ENCODE measurements at regions of chrX and their contacts with region 1.

Region 1: GRCh38 chrX:50905334-50905733 is 5.2 kb upstream of the BMP15 start:
- DNase-seq: peak; percentile 29
- ATAC-seq: no peak
- H3K4me3 Mint-ChIP-seq: no peak overlapping the region
- H3K27ac Mint-ChIP-seq: no peak overlapping the region
- H3K4me1 Mint-ChIP-seq: no peaks in the 10 kb centered on the region
- H3K27me3 Mint-ChIP-seq: no peaks in the 10 kb centered on the region
- CTCF ChIP-seq: peak; percentile 61

Region 2: DNA sequence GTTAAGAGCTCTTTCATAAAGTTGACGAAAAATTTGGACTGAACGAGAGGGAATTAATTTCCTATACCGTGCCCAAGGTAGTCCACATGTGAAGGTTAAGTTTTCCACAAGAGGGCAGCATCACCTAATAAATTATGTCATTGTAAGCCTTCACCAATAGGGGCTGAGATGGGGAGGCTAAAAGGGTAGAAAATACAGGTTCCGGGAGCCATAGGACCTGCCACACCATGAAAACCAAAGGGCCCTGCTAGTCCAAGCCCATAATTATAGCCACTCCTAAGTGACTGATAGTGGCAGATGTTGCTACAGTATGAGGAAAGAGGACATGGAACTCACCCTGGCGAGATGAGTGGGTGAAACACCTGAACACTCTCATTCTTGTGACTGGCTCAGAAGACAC is 213.5 kb before region 1 on chrX:
- CTCF ChIA-PET with region 1: interaction called, 12 read pairs
- POLR2A ChIA-PET with region 1: no interaction called
- DNase-seq: no peak
- ATAC-seq: peak; percentile 76
- H3K4me3 Mint-ChIP-seq: no peak overlapping the region
- H3K27ac Mint-ChIP-seq: no peak overlapping the region
- H3K4me1 Mint-ChIP-seq: peaks cover 11% of the 10 kb centered on the region
- H3K27me3 Mint-ChIP-seq: no peaks in the 10 kb centered on the region
- CTCF ChIP-seq: peak; percentile 52

Region 3: GRCh38 chrX:50747471-50747900 is 157.8 kb before region 1 on chrX:
- CTCF ChIA-PET with region 1: interaction called, 15 read pairs
- POLR2A ChIA-PET with region 1: no interaction called
- DNase-seq: peak; percentile 17
- ATAC-seq: peak; percentile 51; the same call in 1 of the 2 replicates
- H3K4me3 Mint-ChIP-seq: no peak overlapping the region
- H3K27ac Mint-ChIP-seq: no peak overlapping the region
- H3K4me1 Mint-ChIP-seq: no peaks in the 10 kb centered on the region
- H3K27me3 Mint-ChIP-seq: no peaks in the 10 kb centered on the region
- CTCF ChIP-seq: peak; percentile 47; the same call in 1 of the 2 replicates

Region 4: DNA sequence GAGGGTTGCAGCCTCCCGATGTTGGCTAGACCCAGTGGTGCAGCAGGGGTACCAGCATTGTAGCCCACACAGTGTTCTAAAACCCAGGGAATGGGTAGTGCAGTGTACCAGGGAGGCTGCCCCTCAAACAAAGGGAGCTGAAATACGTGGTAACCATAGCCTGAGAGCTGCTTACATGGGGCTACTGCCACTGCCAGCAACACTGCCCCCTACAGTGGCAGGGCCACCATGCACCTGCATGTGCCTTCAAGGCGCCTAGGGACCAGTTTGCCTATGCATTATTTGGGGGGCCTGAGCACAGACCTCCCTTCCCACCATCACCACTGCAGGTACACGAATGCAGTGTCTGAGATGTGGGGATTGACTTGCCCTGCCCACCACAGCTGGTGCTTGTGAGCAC is 15.8 kb before region 1 on chrX:
- CTCF ChIA-PET with region 1: interaction called, 12 read pairs
- POLR2A ChIA-PET with region 1: no interaction called
- DNase-seq: peak; percentile 50
- ATAC-seq: peak; percentile 66
- H3K4me3 Mint-ChIP-seq: no peak overlapping the region
- H3K27ac Mint-ChIP-seq: no peak overlapping the region
- H3K4me1 Mint-ChIP-seq: no peaks in the 10 kb centered on the region
- H3K27me3 Mint-ChIP-seq: no peaks in the 10 kb centered on the region
- CTCF ChIP-seq: peak; percentile 39; the same call in 1 of the 2 replicates

Measured in WTC11 (cell line).